ENCODE measurements at regions of chr2 and their contacts with region 1.

Region 1: GRCh38 chr2:146561996-146562395 is 1282.8 kb upstream of the ACVR2A start:
- DNase-seq: no peak
- H3K4me3 ChIP-seq: no peak overlapping the region
- H3K27ac ChIP-seq: no peak overlapping the region
- H3K4me1 ChIP-seq: no peaks in the 10 kb centered on the region
- H3K27me3 ChIP-seq: no peaks in the 10 kb centered on the region
- CTCF ChIP-seq: no peak
- EP300 ChIP-seq: no peak
- POLR2A ChIP-seq: peak in 1 of 2 experiments; percentile 69; a peak in 2 of 3 replicates
- RAD21 ChIP-seq: no peak

Region 2: GRCh38 chr2:146489386-146489785 is 72.6 kb before region 1 on chr2:
- CTCF ChIA-PET with region 1: no interaction called
- POLR2A ChIA-PET with region 1: no interaction called
- DNase-seq: no peak
- H3K4me3 ChIP-seq: no peak overlapping the region
- H3K27ac ChIP-seq: no peak overlapping the region
- H3K4me1 ChIP-seq: no peaks in the 10 kb centered on the region
- H3K27me3 ChIP-seq: no peaks in the 10 kb centered on the region
- CTCF ChIP-seq: no peak
- EP300 ChIP-seq: no peak
- POLR2A ChIP-seq: no peak
- RAD21 ChIP-seq: no peak

Region 3: DNA sequence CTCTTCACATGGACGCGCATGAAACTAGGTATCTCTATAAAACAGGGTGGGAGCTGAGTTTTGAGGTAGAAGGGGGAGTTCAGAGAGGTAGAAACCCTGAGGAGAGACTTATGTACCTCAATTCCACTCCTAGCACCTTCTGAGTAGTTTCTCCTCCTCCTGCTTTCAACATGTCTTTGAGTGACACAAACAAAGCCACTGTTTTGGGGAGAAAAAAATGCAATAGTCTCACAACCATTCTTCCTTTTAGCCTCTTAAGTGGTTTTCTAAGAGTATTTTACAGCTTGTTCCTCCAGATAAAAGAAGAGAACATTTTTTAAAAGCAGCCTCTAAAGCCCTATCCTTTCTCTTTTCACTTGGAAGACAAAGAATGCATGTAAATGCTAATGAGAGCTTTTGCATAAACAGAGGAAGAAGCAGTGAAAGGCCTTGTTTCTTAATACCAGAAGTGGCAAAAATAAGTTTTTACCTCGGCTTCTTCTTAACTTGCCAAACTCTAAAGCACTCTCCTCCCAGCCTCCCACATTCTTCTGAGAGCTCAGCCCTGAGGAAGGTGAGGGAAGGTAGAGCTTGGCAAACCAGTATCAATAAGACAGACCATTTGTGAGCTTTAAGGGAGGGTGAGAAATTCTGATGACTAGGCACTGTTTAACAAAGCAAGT is 21.6 kb before region 1 on chr2:
- CTCF ChIA-PET with region 1: no interaction called
- POLR2A ChIA-PET with region 1: interaction called, 18 read pairs
- DNase-seq: peak; percentile 71 to 88
- H3K4me3 ChIP-seq: no peak overlapping the region; a peak in 1 of 8 replicates
- H3K27ac ChIP-seq: peak overlapping the region; percentile 94
- H3K4me1 ChIP-seq: peaks cover 2 to 26% (median 15%) of the 10 kb centered on the region in 4 experiments; a peak in 6 of 7 replicates
- H3K27me3 ChIP-seq: no peaks in the 10 kb centered on the region
- CTCF ChIP-seq: no peak
- EP300 ChIP-seq: 0 out of 3 replicates have a peak, but pooled peaks of 1 of the 2 experiments have one; percentile 51
- POLR2A ChIP-seq: no peak; a peak in 1 of 3 replicates
- RAD21 ChIP-seq: no peak

Region 4: GRCh38 chr2:147082850-147083522 is 521.0 kb after region 1 on chr2:
- CTCF ChIA-PET with region 1: no interaction called
- POLR2A ChIA-PET with region 1: no interaction called
- DNase-seq: peak; percentile 53 to 82
- H3K4me3 ChIP-seq: no peak overlapping the region
- H3K27ac ChIP-seq: no peak overlapping the region
- H3K4me1 ChIP-seq: no peaks in the 10 kb centered on the region
- H3K27me3 ChIP-seq: no peaks in the 10 kb centered on the region
- CTCF ChIP-seq: peak in 2 of 3 experiments; percentile 77 to 93; a peak in 3 of 4 replicates
- EP300 ChIP-seq: no peak
- POLR2A ChIP-seq: no peak
- RAD21 ChIP-seq: peak; percentile 80 to 87

Measured in H1 (cell line).